Activated B cell treated with CpG ODN at 0.5 μM for 24 hours (primary cell): ENCODE measurements at regions of chr11 and their contacts with region 1.

Region 1: DNA sequence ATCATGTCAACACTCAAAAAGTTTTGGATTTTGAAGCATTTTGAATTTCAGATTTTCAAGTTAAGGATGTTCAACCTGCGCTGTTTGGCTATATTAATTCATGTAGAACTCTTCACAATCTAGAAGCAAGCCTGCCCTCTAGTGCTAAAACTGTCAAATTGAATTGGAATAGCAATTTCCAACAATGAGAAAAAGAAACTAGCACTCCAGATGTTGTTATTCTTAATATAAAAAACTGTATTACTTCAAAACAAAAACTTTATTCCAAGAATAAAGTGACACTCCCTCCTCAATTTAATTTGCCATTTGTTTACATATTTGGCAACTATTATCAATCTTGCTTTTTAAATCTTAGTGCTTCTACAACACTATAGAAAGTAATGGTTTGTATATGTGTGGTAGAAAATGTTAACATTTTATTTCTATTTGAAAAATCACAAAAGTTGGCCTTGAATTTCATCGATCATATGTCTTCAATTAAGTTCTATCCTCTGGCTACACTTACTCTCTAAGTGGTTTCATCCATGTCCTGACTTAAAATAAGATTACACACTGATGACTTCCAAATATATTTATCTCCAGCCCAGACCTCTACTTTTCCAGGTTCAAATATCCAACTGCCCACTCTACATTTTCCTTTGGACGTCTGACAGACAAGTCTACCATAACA is 36.6 kb downstream of the DCUN1D5 start:
- DNase-seq: no peak
- ATAC-seq: peak; percentile 37
- H3K4me3 Mint-ChIP-seq: no peak overlapping the region
- H3K27ac Mint-ChIP-seq: no peak overlapping the region
- H3K4me1 Mint-ChIP-seq: no peaks in the 10 kb centered on the region
- H3K27me3 Mint-ChIP-seq: no peaks in the 10 kb centered on the region
- CTCF ChIP-seq: no peak

Region 2: GRCh38 chr11:102914238-102915043 is 140.9 kb before region 1 on chr11:
- CTCF ChIA-PET with region 1: no interaction called
- POLR2A ChIA-PET with region 1: no interaction called
- intact Hi-C with region 1: loop called (anchors 5 kb)
- DNase-seq: no peak
- ATAC-seq: no peak
- H3K4me3 Mint-ChIP-seq: no peak overlapping the region
- H3K27ac Mint-ChIP-seq: no peak overlapping the region
- H3K4me1 Mint-ChIP-seq: no peaks in the 10 kb centered on the region
- H3K27me3 Mint-ChIP-seq: peaks cover 1% of the 10 kb centered on the region
- CTCF ChIP-seq: no peak

Region 3: DNA sequence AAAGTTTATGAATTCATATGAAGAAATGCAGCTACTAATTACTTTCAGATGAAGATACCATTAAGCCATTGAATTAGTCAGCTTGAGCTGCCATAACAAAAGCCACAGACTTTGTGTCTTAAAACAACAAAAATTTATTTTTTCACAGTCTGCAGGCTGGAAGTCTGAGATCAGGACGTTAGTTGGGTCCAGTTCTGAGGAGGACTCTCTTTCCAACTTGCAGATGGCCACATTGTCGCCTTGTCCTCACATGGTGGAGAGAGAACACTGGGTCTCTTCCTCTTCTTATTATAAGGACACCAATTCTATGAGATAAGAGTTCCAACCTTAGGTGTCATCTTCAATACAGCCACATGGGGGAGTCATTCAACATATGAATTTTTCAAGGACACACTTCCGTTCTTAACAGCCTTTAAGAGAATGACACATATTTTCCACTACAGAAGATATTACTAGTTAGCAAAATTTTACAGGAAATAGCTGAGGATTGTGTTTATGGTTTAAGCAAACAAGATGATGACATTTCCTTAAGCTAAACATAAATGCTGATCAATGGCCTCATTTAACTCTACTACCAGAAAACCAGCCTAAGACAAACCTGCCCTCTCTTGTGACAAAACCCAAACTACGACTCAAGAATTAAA is 19.4 kb before region 1 on chr11:
- CTCF ChIA-PET with region 1: interaction called, 7 read pairs
- POLR2A ChIA-PET with region 1: no interaction called
- intact Hi-C with region 1: loop called (anchors 1 kb)
- DNase-seq: no peak
- ATAC-seq: peak; percentile 96
- H3K4me3 Mint-ChIP-seq: no peak overlapping the region
- H3K27ac Mint-ChIP-seq: no peak overlapping the region
- H3K4me1 Mint-ChIP-seq: peaks cover 4% of the 10 kb centered on the region
- H3K27me3 Mint-ChIP-seq: no peaks in the 10 kb centered on the region
- CTCF ChIP-seq: peak; percentile 38

Region 4: DNA sequence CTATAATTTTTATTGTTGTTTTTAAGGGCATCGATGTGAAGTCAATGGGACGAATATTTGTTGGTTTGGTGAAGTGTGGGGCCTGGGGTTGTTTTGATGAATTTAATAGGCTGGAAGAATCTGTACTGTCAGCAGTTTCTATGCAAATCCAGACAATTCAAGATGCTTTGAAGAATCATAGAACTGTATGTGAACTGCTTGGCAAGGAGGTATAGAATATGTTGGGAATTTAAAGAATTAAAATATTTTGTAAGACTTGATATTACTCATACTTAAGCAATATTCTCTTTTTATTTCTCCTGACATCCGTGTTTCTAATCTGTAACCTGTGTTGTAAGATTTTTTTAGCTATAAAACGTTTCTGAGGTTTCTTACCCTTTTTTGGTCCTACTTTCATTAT is 115.5 kb after region 1 on chr11:
- CTCF ChIA-PET with region 1: no interaction called
- POLR2A ChIA-PET with region 1: no interaction called
- intact Hi-C with region 1: no loop called
- DNase-seq: no peak
- ATAC-seq: no peak
- H3K4me3 Mint-ChIP-seq: no peak overlapping the region
- H3K27ac Mint-ChIP-seq: no peak overlapping the region
- H3K4me1 Mint-ChIP-seq: no peaks in the 10 kb centered on the region
- H3K27me3 Mint-ChIP-seq: no peaks in the 10 kb centered on the region
- CTCF ChIP-seq: no peak